HCT116 (cell line): ENCODE measurements at regions of chr5 and their contacts with region 1.

Region 1: DNA sequence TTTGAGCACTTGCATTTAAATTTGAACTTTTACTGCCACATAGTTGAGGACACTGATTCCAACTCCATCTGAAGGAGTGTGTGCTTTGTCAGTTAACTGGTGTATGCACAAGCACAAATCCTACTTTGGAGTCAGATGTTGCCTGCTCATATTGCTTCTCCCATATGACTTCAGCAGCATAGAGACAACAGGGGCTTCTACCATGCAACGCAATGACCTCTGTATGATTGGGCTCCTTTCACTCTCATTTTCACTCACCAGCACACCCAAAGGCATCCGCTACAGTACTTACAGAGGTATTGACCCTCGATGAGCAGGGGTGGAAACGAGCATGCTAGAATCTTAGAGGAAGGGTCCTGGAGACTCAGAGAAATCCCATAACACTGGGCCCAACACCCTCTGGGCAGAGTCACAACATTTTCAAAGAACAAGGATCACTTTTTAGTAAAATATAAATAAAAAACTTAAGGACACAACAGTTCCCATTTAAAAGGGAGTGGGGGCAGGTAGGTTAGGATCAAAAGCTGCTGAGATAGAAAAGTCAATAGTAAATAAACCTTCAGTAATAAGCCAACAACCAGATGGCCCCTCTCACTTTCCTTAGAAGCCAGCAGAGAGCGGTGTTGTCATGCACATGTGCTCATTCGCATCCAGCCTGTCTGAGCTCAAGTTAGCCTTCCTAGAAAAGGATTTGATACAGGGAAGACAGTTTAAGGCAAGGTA is 203.8 kb downstream of the SNCAIP start:
- DNase-seq: peak; percentile 71
- ATAC-seq: peak; percentile 94
- H3K4me3 ChIP-seq: no peak overlapping the region
- H3K27ac ChIP-seq: no peak overlapping the region
- H3K4me1 ChIP-seq: no peaks in the 10 kb centered on the region
- H3K27me3 ChIP-seq: no peaks in the 10 kb centered on the region
- CTCF ChIP-seq: peak; percentile 74 to 83 (median 75)
- POLR2A ChIP-seq: no peak
- RAD21 ChIP-seq: peak; percentile 93

Region 2: GRCh38 chr5:122704243-122705036 is 188.6 kb after region 1 on chr5:
- CTCF ChIA-PET with region 1: no interaction called
- POLR2A ChIA-PET with region 1: no interaction called
- RAD21 ChIA-PET with region 1: no interaction called
- intact Hi-C with region 1: no loop called
- DNase-seq: peak; percentile 43
- ATAC-seq: peak; percentile 85
- H3K4me3 ChIP-seq: no peak overlapping the region
- H3K27ac ChIP-seq: no peak overlapping the region
- H3K4me1 ChIP-seq: no peaks in the 10 kb centered on the region
- H3K27me3 ChIP-seq: no peaks in the 10 kb centered on the region
- CTCF ChIP-seq: peak; percentile 30 to 70 (median 53); a peak in 5 of 6 replicates
- POLR2A ChIP-seq: no peak
- RAD21 ChIP-seq: peak; percentile 52

Region 3: DNA sequence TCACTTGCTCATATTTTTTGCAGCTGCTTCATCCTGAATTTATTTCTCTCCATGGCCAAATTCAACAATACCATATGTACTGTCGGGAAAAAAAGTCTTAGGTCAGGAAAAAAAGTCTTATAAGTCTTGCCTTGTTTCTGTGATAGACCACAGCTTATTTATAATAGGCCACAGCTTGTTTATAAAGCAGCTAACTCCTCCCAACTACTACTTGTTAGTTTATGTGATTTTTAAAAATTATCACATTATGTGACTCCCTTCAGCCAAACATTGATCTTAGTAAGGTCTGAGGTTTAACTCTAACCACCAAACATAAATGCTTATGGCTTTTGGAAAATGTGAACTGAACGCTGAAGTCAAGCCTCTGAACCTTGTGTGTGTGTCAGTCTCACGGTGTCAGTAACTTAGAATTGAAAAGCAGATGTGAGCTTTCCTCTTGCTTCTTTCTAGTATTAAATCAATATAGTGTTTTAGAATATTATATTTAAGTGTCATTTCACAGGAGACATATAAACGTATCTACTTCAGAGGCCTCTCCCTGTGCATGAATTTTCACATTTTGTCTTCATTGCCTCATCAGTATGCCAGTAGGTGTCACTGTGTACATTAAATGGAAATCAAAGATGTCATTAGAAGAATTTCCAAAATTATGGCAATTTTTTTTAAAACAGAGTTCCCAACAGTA is 380.9 kb after region 1 on chr5:
- CTCF ChIA-PET with region 1: no interaction called
- POLR2A ChIA-PET with region 1: no interaction called
- RAD21 ChIA-PET with region 1: no interaction called
- intact Hi-C with region 1: loop called (anchors 5 kb)
- DNase-seq: peak; percentile 7
- ATAC-seq: no peak
- H3K4me3 ChIP-seq: no peak overlapping the region
- H3K27ac ChIP-seq: no peak overlapping the region
- H3K4me1 ChIP-seq: no peaks in the 10 kb centered on the region
- H3K27me3 ChIP-seq: no peaks in the 10 kb centered on the region
- CTCF ChIP-seq: peak; percentile 46 to 63 (median 52); a peak in 5 of 6 replicates
- POLR2A ChIP-seq: no peak
- RAD21 ChIP-seq: peak; percentile 65

Region 4: GRCh38 chr5:123157791-123158581 is 642.1 kb after region 1 on chr5:
- CTCF ChIA-PET with region 1: interaction called, 10 read pairs
- POLR2A ChIA-PET with region 1: no interaction called
- RAD21 ChIA-PET with region 1: interaction called in 1 of 2 experiments, 3 read pairs
- intact Hi-C with region 1: no loop called
- DNase-seq: peak; percentile 27
- ATAC-seq: peak; percentile 70
- H3K4me3 ChIP-seq: no peak overlapping the region
- H3K27ac ChIP-seq: no peak overlapping the region
- H3K4me1 ChIP-seq: peaks cover 18 to 30% of the 10 kb centered on the region in 2 experiments
- H3K27me3 ChIP-seq: no peaks in the 10 kb centered on the region
- CTCF ChIP-seq: no peak
- POLR2A ChIP-seq: no peak
- RAD21 ChIP-seq: peak; percentile 40

Region 5: DNA sequence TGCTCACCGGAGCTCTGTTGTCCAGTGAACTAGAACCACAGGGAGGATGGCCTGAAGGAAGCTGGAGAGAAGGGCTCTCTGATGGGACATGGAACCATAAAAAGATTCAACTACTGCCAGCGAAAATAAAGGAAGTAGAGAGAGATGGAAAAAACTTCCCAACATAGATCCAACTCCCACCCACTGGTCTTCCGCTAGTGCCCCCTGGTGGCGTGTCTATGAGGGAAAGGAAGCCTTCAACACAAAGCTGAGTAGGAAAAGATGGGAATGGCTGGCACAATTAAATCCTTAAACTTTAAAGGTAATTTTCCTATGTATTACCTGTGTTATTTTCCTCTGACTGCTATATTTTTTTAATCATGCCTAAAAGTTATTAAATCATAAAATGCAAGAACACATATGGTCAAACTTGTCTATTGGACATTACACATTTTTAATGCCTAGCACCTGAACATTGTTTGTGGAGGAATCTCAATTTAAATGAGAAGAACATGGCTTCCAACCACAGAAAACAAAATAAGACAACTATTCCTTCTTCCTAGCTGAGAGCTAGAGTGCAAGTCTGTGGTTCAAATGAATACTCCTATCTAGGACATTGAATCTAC is 855.8 kb after region 1 on chr5:
- CTCF ChIA-PET with region 1: interaction called, 11 read pairs
- POLR2A ChIA-PET with region 1: no interaction called
- RAD21 ChIA-PET with region 1: interaction called in 1 of 2 experiments, 5 read pairs
- intact Hi-C with region 1: loop called (anchors 1 kb)
- DNase-seq: no peak
- ATAC-seq: peak; percentile 70
- H3K4me3 ChIP-seq: no peak overlapping the region
- H3K27ac ChIP-seq: no peak overlapping the region
- H3K4me1 ChIP-seq: no peaks in the 10 kb centered on the region
- H3K27me3 ChIP-seq: no peaks in the 10 kb centered on the region
- CTCF ChIP-seq: peak in 2 of 3 experiments; percentile 55 to 67; a peak in 4 of 6 replicates
- POLR2A ChIP-seq: no peak
- RAD21 ChIP-seq: peak; percentile 31; the same call in 1 of the 2 replicates

Region 6: GRCh38 chr5:123610665-123611405 is 1095.0 kb after region 1 on chr5:
- CTCF ChIA-PET with region 1: interaction called, 9 read pairs
- POLR2A ChIA-PET with region 1: interaction called, 3 read pairs
- RAD21 ChIA-PET with region 1: interaction called in 1 of 2 experiments, 3 read pairs
- intact Hi-C with region 1: loop called (anchors 2 kb)
- DNase-seq: peak; percentile 54
- ATAC-seq: peak; percentile 75
- H3K4me3 ChIP-seq: no peak overlapping the region
- H3K27ac ChIP-seq: no peak overlapping the region
- H3K4me1 ChIP-seq: no peaks in the 10 kb centered on the region
- H3K27me3 ChIP-seq: no peaks in the 10 kb centered on the region
- CTCF ChIP-seq: peak; percentile 66 to 99 (median 84); a peak in 5 of 6 replicates
- POLR2A ChIP-seq: no peak
- RAD21 ChIP-seq: peak; percentile 86